Psoas muscle (tissue), 8 donors: ENCODE measurements at regions of chr11 and their contacts with region 1.

Region 1: DNA sequence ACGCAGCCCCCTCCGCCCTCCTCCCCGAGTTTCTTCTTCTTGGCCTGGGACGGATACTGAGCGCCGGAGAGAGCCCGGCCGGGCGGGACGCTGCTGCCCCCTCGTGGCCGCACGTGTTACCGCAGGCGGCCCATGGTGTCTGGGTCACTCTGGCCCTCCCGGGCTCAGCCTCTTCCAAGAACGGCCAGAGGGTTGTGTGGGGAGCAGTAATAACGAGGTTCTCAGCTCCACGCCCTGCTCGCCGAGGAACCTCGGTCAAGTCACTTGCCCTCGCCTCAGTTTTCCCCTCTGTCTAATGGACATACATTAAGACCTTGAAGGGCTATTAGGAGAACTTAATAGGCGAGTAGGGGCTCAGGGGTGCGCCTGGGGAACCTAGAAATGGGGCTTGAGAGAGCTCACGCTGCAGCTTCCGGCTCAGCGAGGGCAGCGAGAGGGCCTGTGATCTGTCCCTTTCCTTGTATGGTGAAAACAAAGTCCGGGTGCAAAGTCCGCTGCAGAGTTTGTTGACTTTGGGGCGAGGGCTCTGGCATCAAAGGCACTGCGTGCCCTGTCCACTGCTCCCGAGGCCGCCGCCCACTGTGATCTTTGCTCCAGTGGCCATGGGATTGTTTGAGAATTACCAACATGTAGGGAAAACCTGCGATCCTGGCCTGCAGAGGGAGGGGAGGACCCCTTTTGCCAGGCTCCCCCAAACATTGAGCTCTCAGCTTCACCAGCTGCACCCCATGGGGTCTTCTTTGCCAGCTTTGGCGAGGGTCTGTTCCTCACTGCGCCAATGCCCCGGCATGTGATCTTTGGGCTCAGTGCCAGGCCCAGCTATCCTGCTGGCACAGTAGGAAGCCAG is 14.4 kb upstream of the LRP5 start:
- DNase-seq: peak; percentile 83 to 90
- ATAC-seq: peak; percentile 95 to 99 (median 96)
- H3K4me3 ChIP-seq: no peak overlapping the region
- H3K27ac ChIP-seq: no peak overlapping the region
- H3K4me1 ChIP-seq: peaks cover 6% of the 10 kb centered on the region
- H3K27me3 ChIP-seq: no peaks in the 10 kb centered on the region
- CTCF ChIP-seq: peak; percentile 98

Region 2: GRCh38 chr11:68181719-68182451 is 116.2 kb before region 1 on chr11:
- intact Hi-C with region 1: no loop called
- DNase-seq: no peak
- ATAC-seq: peak in 1 of 4 donors; percentile 30
- H3K4me3 ChIP-seq: no peak overlapping the region
- H3K27ac ChIP-seq: no peak overlapping the region
- H3K4me1 ChIP-seq: no peaks in the 10 kb centered on the region
- H3K27me3 ChIP-seq: no peaks in the 10 kb centered on the region
- CTCF ChIP-seq: no peak

Region 3: GRCh38 chr11:68213555-68214174 is 84.4 kb before region 1 on chr11:
- intact Hi-C with region 1: loop called in 1 of 2 experiments (anchors 2 kb)
- DNase-seq: peak; percentile 93 to 95
- ATAC-seq: peak; percentile 59 to 67 (median 61)
- H3K4me3 ChIP-seq: peak overlapping the region; percentile 92
- H3K27ac ChIP-seq: peak overlapping the region; percentile 96
- H3K4me1 ChIP-seq: peaks cover 53% of the 10 kb centered on the region
- H3K27me3 ChIP-seq: no peaks in the 10 kb centered on the region
- CTCF ChIP-seq: no peak

Region 4: GRCh38 chr11:68314203-68315170 is 16.5 kb after region 1 on chr11:
- intact Hi-C with region 1: no loop called
- DNase-seq: no peak
- ATAC-seq: peak; percentile 40 to 62 (median 50)
- H3K4me3 ChIP-seq: peak overlapping the region; percentile 79
- H3K27ac ChIP-seq: peak overlapping the region; percentile 83
- H3K4me1 ChIP-seq: peaks cover 39% of the 10 kb centered on the region
- H3K27me3 ChIP-seq: no peaks in the 10 kb centered on the region
- CTCF ChIP-seq: no peak